ENCODE measurements at regions of chr12 and their contacts with region 1.

Region 1: DNA sequence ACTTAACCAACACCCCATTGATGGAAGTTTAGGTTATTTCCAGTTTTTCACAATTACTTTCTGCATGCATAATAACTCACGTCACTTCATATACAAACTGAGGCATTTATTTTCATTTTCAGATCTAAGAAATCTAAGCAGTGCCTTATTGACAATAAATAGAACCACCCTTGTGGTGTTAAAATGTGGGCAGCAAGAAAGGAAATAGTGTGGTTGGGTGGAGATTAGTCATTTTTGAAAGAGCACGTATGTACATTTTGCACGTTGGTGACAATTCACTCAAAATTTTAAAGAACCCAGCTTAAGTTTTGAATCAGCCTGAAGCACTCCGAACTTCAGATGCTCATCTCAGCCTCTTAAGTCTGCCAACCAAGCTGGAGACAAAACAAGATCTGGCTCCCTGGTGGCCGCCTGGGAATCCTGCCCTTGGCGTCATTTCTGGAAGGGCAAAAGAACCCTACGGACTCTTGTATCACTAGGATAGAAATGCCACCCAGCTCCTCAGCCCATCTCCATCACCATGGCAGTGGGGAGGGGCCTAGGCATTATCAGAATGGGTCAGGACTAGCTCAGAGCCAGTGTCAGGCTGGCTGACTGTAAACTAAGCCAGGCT is 89.5 kb upstream of the BCL2L14 start:
- DNase-seq: peak; percentile 79
- H3K4me3 Mint-ChIP-seq: peak overlapping the region; percentile 11
- H3K27ac Mint-ChIP-seq: peak overlapping the region; percentile 96
- H3K4me1 Mint-ChIP-seq: peaks cover 62% of the 10 kb centered on the region
- H3K27me3 Mint-ChIP-seq: no peaks in the 10 kb centered on the region

Region 2: GRCh38 chr12:11969437-11970154 is 11.6 kb before region 1 on chr12:
- CTCF ChIA-PET with region 1: interaction called, 30 read pairs
- POLR2A ChIA-PET with region 1: no interaction called
- DNase-seq: no peak
- H3K4me3 Mint-ChIP-seq: no peak overlapping the region
- H3K27ac Mint-ChIP-seq: no peak overlapping the region
- H3K4me1 Mint-ChIP-seq: peaks cover 2% of the 10 kb centered on the region
- H3K27me3 Mint-ChIP-seq: peaks cover 8% of the 10 kb centered on the region

Measured in activated CD4-positive, alpha-beta T cell treated with anti-CD3 and anti-CD28 coated beads, Interleukin-2, amount 10 ng/mL, durations not matched to agents 7 days and 5 days (primary cell).